ENCODE measurements at regions of chr4 and their contacts with region 1.

Region 1: GRCh38 chr4:173135241-173135847 is 33.3 kb upstream of the GALNT7 start:
- DNase-seq: no peak
- ATAC-seq: no peak
- H3K4me3 ChIP-seq: no peak overlapping the region
- H3K27ac ChIP-seq: no peak overlapping the region
- H3K4me1 ChIP-seq: no peaks in the 10 kb centered on the region
- H3K27me3 ChIP-seq: no peaks in the 10 kb centered on the region
- CTCF ChIP-seq: no peak
- POLR2A ChIP-seq: no peak

Region 2: GRCh38 chr4:173209473-173209915 is 74.2 kb after region 1 on chr4:
- intact Hi-C with region 1: loop called in 1 of 10 experiments (anchors 10 kb)
- DNase-seq: no peak
- ATAC-seq: no peak
- H3K4me3 ChIP-seq: no peak overlapping the region
- H3K27ac ChIP-seq: no peak overlapping the region
- H3K4me1 ChIP-seq: peaks cover 0 to 8% (median 2%) of the 10 kb centered on the region in 12 donors
- H3K27me3 ChIP-seq: no peaks in the 10 kb centered on the region
- CTCF ChIP-seq: no peak
- POLR2A ChIP-seq: no peak

Region 3: DNA sequence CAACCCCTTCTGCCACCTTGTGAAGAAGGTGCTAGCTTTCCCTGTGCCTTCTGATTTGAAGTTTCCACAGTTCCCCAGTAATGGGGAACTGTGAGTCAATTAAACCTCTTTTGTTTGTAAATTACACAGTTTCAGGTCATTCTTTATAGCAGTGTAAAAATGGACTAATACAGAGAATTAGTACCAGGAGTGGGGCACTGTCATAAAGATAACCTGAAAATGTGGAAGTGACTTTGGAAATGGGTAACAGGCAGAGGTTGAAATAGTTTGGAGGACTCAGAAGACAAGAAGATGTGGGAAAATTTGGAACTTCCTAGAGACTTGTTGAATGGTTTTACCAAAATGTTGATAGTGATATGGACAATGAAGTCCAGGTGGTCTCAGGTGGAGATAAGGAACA is 525.7 kb after region 1 on chr4:
- intact Hi-C with region 1: no loop called
- DNase-seq: no peak
- ATAC-seq: no peak
- H3K4me3 ChIP-seq: no peak overlapping the region
- H3K27ac ChIP-seq: no peak overlapping the region
- H3K4me1 ChIP-seq: peaks cover 0 to 8% (median 0%) of the 10 kb centered on the region in 12 donors
- H3K27me3 ChIP-seq: no peaks in the 10 kb centered on the region
- CTCF ChIP-seq: no peak
- POLR2A ChIP-seq: no peak

Measured in heart left ventricle (tissue), 16 donors.